PC-3 (cell line): ENCODE measurements at regions of chr9 and their contacts with region 1.

Region 1: GRCh38 chr9:98231770-98232478 is 23.5 kb downstream of the TBC1D2 start:
- DNase-seq: peak; percentile 61
- ATAC-seq: peak; percentile 80
- H3K4me3 ChIP-seq: no peak overlapping the region
- H3K27ac ChIP-seq: no peak overlapping the region
- H3K4me1 ChIP-seq: peaks cover 27% of the 10 kb centered on the region
- H3K27me3 ChIP-seq: no peaks in the 10 kb centered on the region
- CTCF ChIP-seq: no peak

Region 2: DNA sequence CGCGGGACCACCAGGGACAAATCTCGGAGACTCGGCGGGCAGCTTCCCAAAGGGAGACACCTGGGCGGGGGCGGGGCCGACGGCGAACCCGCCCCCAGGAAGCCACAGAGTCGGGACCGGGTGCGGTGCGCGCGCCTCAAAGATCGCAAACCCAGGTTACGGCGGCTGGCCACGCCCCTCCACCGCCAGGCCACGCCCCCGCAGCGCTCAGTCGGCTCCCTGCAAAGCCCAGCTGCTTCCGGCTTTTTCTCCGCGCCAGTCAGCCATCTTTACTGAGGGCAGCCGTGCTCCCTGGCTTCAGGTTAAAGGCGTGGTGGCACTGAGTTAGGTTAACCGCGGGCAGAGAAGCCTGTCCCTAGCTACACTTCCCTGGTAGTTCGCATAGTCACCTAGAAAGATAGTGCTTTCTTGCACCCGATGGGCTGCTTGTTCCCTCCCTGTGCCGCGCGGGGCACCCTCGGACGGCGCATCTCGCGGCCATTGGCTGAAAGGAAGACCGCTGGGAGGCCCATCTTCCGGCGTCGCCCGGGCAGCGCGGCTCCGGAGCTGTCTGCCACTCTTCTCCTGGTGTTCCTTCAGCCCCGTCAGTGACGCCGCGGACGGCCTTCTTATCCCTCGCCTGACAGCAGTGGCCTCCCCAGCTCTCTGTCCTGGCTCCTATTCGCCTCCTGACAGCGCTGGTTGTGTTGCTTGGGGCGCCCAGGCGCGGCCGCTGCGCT is 23.8 kb after region 1 on chr9 and contains the start of gene TBC1D2:
- CTCF ChIA-PET with region 1: no interaction called
- POLR2A ChIA-PET with region 1: interaction called, 13 read pairs
- intact Hi-C with region 1: no loop called
- DNase-seq: peak; percentile 91
- ATAC-seq: peak; percentile 90
- H3K4me3 ChIP-seq: peak within 1 kb of the TSS; percentile 100
- H3K27ac ChIP-seq: peak within 1 kb of the TSS; percentile 75
- H3K4me1 ChIP-seq: peaks cover 43% of the 10 kb centered on the region
- H3K27me3 ChIP-seq: no peaks in the 10 kb centered on the region
- CTCF ChIP-seq: no peak
- total RNA-seq, gene TBC1D2: 7.4 and 8.2 TPM in 2 replicates